T-cell (primary cell): ENCODE measurements at regions of chr17 and their contacts with region 1.

Region 1: DNA sequence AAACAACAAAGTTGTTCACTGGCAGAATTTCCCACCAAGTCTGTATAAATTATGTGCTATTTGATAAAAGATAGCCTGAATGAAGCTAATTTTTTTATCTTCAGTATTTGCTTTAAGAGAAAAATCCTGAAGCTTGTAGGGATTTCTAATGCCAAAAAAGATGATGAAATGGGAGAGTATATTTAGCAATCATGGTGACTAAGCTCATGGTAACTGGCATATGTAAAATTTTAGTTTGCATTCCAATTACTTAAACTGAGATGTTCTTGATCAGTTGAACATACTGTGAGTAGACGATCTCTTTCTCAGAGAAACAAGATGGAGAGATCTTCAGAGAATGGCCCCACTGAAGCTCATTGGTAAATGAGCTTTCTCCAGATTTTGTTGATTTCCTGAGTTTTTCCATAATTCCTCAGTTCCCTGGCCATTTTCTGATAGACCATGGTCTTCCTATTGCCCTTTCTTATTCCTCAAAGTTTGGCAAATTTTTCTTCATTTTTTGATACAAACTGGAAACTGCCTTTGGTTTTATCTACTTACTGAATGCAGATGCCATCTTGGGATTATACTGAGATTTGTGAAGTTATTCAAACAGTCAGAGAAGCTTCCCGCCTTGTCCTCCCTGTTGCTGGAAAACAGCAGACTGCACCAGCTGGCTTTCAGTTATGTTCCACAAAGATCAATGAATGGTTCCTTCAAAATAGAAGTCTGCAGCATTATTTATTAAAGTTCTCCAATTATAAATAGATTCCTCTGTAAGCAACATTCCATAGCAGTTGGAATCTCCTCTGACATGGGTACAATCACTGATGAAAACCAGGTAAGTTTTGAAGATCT is 68.3 kb upstream of the ALOX12 start:
- DNase-seq: no peak
- ATAC-seq: no peak
- H3K4me3 ChIP-seq: no peak overlapping the region
- H3K4me3 Mint-ChIP-seq: no peak overlapping the region
- H3K27ac ChIP-seq: no peak overlapping the region
- H3K27ac Mint-ChIP-seq: no peak overlapping the region
- H3K4me1 ChIP-seq: peaks cover 8 to 14% of the 10 kb centered on the region in 2 experiments
- H3K4me1 Mint-ChIP-seq: peaks cover 13 to 21% (median 20%) of the 10 kb centered on the region in 3 donors
- H3K27me3 ChIP-seq: no peaks in the 10 kb centered on the region
- H3K27me3 Mint-ChIP-seq: no peaks in the 10 kb centered on the region

Region 2: GRCh38 chr17:6969323-6969726 is 41.8 kb after region 1 on chr17:
- CTCF ChIA-PET with region 1: interaction called in 1 of 2 experiments, 4 read pairs
- POLR2A ChIA-PET with region 1: interaction called in 1 of 2 experiments, 13 read pairs
- DNase-seq: no peak
- ATAC-seq: no peak
- H3K4me3 ChIP-seq: no peak overlapping the region
- H3K4me3 Mint-ChIP-seq: no peak overlapping the region
- H3K27ac ChIP-seq: no peak overlapping the region
- H3K27ac Mint-ChIP-seq: no peak overlapping the region
- H3K4me1 ChIP-seq: no peaks in the 10 kb centered on the region
- H3K4me1 Mint-ChIP-seq: peaks cover 0 to 4% (median 0%) of the 10 kb centered on the region in 3 donors
- H3K27me3 ChIP-seq: no peaks in the 10 kb centered on the region
- H3K27me3 Mint-ChIP-seq: no peaks in the 10 kb centered on the region